ENCODE measurements at regions of chr13 and their contacts with region 1.

Region 1: DNA sequence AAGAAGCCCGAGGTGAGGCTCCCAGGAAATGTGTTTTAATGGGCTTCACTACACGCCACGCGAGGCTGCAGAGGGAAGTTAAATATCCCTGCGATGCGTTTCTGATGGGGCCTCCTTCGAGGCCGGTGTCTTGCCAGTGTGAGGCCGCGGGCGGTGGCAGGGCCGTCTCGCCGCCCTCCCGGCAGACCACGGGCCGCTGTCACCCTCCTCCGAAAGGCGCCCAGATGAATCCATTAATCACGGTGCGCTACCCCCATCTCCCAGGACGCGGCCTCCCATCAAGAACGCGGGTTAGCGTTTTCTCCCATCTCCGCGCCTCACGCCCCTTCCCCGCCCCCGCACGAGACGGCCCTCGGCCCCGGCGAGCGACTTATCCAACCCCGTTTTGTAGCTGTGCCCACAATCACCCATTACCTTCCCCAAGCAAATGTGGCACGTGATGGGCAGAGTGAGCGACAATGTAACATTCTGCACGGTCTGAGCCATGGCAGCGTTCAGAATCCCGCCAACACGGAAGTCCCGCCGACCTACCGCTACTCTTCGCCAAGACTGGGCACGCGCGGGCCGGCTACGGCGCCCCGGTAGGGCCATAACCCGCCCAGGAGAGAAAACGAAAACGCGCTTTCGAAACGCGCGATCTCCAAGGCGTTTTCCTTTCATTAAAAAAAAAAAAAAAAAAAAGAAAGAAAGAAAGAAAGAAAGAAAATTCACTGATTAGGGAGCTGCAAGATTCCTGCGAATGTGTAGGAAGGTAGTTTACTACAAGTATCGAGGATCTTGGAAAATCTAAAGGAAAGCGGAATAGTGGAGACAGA is at the start of gene OBI1:
- DNase-seq: peak; percentile 80 to 94 (median 91)
- ATAC-seq: peak; percentile 97
- H3K4me3 ChIP-seq: peak within 1 kb of the TSS; percentile 83 to 100
- H3K4me3 Mint-ChIP-seq: peak within 1 kb of the TSS; percentile 98
- H3K27ac ChIP-seq: peak within 1 kb of the TSS; percentile 64 to 70
- H3K27ac Mint-ChIP-seq: peak within 1 kb of the TSS; percentile 95
- H3K4me1 ChIP-seq: peaks cover 7% of the 10 kb centered on the region
- H3K4me1 Mint-ChIP-seq: peaks cover 42% of the 10 kb centered on the region
- H3K27me3 ChIP-seq: no peaks in the 10 kb centered on the region
- H3K27me3 Mint-ChIP-seq: no peaks in the 10 kb centered on the region
- CTCF ChIP-seq: no peak
- total RNA-seq, gene OBI1: 3.5 to 4.0 TPM

Region 2: DNA sequence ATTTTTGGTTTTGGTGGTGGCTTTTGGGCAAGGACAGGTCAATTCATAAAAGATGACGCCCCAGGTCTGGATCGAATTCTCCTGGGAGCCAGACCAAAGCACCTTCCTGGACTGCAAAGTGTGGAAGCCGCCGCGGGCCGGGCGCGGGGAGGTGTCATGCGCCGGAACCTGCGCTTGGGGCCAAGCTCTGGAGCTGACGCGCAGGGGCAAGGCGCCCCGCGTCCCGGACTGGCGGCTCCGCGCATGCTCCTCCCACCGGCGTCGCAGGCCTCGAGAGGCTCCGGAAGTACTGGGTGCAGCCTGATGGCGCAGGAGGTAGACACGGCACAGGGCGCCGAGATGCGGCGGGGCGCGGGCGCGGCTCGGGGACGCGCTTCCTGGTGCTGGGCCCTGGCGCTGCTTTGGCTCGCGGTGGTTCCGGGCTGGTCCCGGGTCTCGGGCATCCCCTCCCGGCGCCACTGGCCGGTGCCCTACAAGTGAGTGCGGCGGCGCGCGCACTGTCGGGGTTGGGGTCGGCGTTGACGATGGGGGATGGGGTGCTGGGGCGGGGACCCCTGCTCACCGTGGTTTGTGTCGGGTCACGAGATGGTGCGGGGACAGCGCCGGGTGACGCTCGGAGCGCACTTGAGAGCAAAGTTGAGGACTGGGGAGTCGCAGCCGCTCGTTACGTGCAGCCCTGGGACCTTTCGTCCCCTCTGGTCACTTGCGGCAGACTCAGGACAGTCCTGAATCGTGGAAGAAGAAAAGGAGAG is 1666.9 kb before region 1 on chr13 and contains the start of gene CLN5:
- CTCF ChIA-PET with region 1: no interaction called
- POLR2A ChIA-PET with region 1: no interaction called
- intact Hi-C with region 1: loop called in 1 of 2 experiments (anchors 5 kb)
- DNase-seq: peak; percentile 91 to 98 (median 94)
- ATAC-seq: peak; percentile 83
- H3K4me3 ChIP-seq: peak within 1 kb of the TSS; percentile 72 to 86
- H3K4me3 Mint-ChIP-seq: peak within 1 kb of the TSS; percentile 95
- H3K27ac ChIP-seq: peak within 1 kb of the TSS; percentile 84 to 97
- H3K27ac Mint-ChIP-seq: peak within 1 kb of the TSS; percentile 99
- H3K4me1 ChIP-seq: peaks cover 31% of the 10 kb centered on the region
- H3K4me1 Mint-ChIP-seq: peaks cover 53% of the 10 kb centered on the region
- H3K27me3 ChIP-seq: peaks cover 0 to 13% of the 10 kb centered on the region in 2 experiments
- H3K27me3 Mint-ChIP-seq: peaks cover 12% of the 10 kb centered on the region
- CTCF ChIP-seq: no peak
- total RNA-seq, gene CLN5: 23.3 to 23.4 TPM

Region 3: GRCh38 chr13:78609464-78610205 is 49.2 kb before region 1 on chr13:
- CTCF ChIA-PET with region 1: no interaction called
- POLR2A ChIA-PET with region 1: no interaction called
- intact Hi-C with region 1: loop called in 1 of 2 experiments (anchors 5 kb)
- DNase-seq: no peak
- ATAC-seq: no peak
- H3K4me3 ChIP-seq: peak overlapping the region in 1 of 2 experiments; percentile 21
- H3K4me3 Mint-ChIP-seq: peak overlapping the region; percentile 74
- H3K27ac ChIP-seq: no peak overlapping the region
- H3K27ac Mint-ChIP-seq: no peak overlapping the region
- H3K4me1 ChIP-seq: peaks cover 26% of the 10 kb centered on the region
- H3K4me1 Mint-ChIP-seq: peaks cover 31% of the 10 kb centered on the region
- H3K27me3 ChIP-seq: peaks cover 38 to 47% of the 10 kb centered on the region in 2 experiments
- H3K27me3 Mint-ChIP-seq: peaks cover 53% of the 10 kb centered on the region
- CTCF ChIP-seq: no peak

Region 4: GRCh38 chr13:79393564-79394249 is 734.9 kb after region 1 on chr13:
- CTCF ChIA-PET with region 1: no interaction called
- POLR2A ChIA-PET with region 1: no interaction called
- intact Hi-C with region 1: loop called in 1 of 2 experiments (anchors 2 kb)
- DNase-seq: peak in 8 of 9 experiments; percentile 21 to 83 (median 60)
- ATAC-seq: peak; percentile 66
- H3K4me3 ChIP-seq: peak overlapping the region; percentile 15 to 59
- H3K4me3 Mint-ChIP-seq: peak overlapping the region; percentile 84
- H3K27ac ChIP-seq: peak overlapping the region; percentile 42 to 49
- H3K27ac Mint-ChIP-seq: peak overlapping the region; percentile 95
- H3K4me1 ChIP-seq: peaks cover 58% of the 10 kb centered on the region
- H3K4me1 Mint-ChIP-seq: peaks cover 69% of the 10 kb centered on the region
- H3K27me3 ChIP-seq: no peaks in the 10 kb centered on the region
- H3K27me3 Mint-ChIP-seq: no peaks in the 10 kb centered on the region
- CTCF ChIP-seq: no peak

Region 5: GRCh38 chr13:79405829-79406596 is 747.2 kb after region 1 on chr13 and contains the start of gene RBM26:
- CTCF ChIA-PET with region 1: no interaction called
- POLR2A ChIA-PET with region 1: no interaction called
- intact Hi-C with region 1: loop called in 1 of 2 experiments (anchors 5 kb)
- DNase-seq: peak; percentile 86 to 98 (median 93)
- ATAC-seq: peak; percentile 89
- H3K4me3 ChIP-seq: peak within 1 kb of the TSS; percentile 84 to 89
- H3K4me3 Mint-ChIP-seq: peak within 1 kb of the TSS; percentile 96
- H3K27ac ChIP-seq: peak within 1 kb of the TSS; percentile 89 to 92
- H3K27ac Mint-ChIP-seq: peak within 1 kb of the TSS; percentile 99
- H3K4me1 ChIP-seq: peaks cover 56% of the 10 kb centered on the region
- H3K4me1 Mint-ChIP-seq: peaks cover 30% of the 10 kb centered on the region
- H3K27me3 ChIP-seq: no peaks in the 10 kb centered on the region
- H3K27me3 Mint-ChIP-seq: no peaks in the 10 kb centered on the region
- CTCF ChIP-seq: peak; percentile 24
- total RNA-seq, gene RBM26: 55.7 to 61.1 TPM

Region 6: DNA sequence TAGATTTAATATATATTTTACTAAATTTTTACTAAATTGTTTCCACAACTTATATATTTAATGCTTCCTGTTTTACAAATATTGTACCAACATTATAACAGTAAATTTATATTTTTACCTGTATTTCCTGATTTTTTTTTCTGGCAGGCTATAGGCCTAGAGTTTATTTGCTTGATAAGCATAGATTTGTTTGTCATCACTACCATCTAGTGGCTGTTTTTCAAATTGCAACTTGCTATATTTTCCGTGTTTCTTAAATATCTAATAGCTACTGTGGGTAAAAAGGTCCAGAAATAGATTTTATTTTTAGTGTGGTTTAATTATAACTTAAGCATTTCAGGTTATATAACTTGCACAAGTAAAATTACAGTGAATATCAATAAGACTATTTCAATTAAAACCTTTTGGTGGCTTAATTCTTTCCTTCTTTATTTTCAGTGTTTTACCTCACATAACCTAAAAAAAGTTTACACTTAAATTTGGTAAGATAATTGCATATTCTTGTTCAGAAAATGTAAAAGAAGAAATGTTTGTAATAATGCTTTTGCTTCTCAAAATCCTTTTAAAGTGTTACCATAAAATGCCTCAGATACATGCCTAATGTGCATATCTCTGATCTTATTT is 882.7 kb after region 1 on chr13:
- CTCF ChIA-PET with region 1: no interaction called
- POLR2A ChIA-PET with region 1: no interaction called
- intact Hi-C with region 1: loop called in 1 of 2 experiments (anchors 10 kb)
- DNase-seq: peak in 3 of 9 experiments; percentile 13 to 80 (median 75)
- ATAC-seq: peak; percentile 71
- H3K4me3 ChIP-seq: no peak overlapping the region
- H3K4me3 Mint-ChIP-seq: no peak overlapping the region
- H3K27ac ChIP-seq: no peak overlapping the region
- H3K27ac Mint-ChIP-seq: no peak overlapping the region
- H3K4me1 ChIP-seq: no peaks in the 10 kb centered on the region
- H3K4me1 Mint-ChIP-seq: no peaks in the 10 kb centered on the region
- H3K27me3 ChIP-seq: no peaks in the 10 kb centered on the region
- H3K27me3 Mint-ChIP-seq: no peaks in the 10 kb centered on the region
- CTCF ChIP-seq: peak; percentile 95

Measured in CD8-positive, alpha-beta T cell (primary cell).